ENCODE measurements at regions of chr14 and their contacts with region 1.

Region 1: DNA sequence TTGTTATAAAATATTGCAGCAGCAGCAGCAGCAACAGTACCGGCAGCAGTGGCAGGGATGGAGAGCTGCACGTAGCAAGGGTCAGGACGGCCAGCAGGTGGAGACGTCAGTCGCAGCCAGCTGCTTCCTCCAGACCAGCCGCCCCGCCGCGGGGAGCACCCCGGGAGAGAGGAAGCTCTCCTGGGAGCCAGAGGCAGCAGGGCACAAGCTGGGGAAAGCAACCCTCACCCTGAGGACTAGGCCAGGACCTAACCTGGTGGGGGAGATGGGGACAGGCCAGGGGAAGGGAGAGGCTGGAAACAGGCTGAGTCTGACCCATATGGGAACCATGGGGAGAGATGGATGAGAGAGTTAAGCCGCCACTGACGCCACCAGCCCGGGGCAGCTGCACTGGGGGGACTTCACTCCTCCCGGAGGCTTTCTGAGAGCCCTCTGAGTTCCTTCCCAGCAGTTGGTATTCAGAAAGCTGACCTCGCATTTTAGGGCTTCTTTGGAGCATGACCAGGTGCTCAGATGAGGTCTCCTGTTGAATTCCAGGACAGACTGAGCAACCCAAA is 56.3 kb downstream of the SPTB start:
- DNase-seq: peak; percentile 79
- ATAC-seq: peak; percentile 96
- H3K4me3 Mint-ChIP-seq: no peak overlapping the region
- H3K27ac Mint-ChIP-seq: no peak overlapping the region
- H3K4me1 Mint-ChIP-seq: peaks cover 5% of the 10 kb centered on the region
- H3K27me3 Mint-ChIP-seq: peaks cover 12% of the 10 kb centered on the region
- CTCF ChIP-seq: peak; percentile 71

Region 2: DNA sequence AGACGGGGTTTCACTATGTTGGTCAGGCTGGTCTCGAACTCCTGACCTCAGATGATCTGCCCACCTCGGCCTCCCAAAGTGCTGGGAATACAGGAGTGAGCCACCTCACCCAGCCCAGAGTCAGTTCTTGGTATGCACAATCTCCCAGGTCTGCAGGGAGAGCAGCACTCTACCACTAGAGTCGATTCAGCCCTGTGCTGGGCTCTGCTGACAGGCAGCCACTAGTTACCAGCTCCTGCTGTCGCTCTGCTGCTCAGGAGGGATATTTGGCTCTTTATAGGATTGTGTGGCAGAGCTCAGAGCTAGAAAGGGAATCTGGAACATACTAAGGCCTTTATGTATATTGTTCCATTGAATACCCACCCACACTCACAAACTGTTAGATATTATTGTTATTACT is 12.0 kb after region 1 on chr14:
- CTCF ChIA-PET with region 1: interaction called, 20 read pairs
- POLR2A ChIA-PET with region 1: no interaction called
- intact Hi-C with region 1: no loop called
- DNase-seq: no peak
- ATAC-seq: no peak
- H3K4me3 Mint-ChIP-seq: no peak overlapping the region
- H3K27ac Mint-ChIP-seq: no peak overlapping the region
- H3K4me1 Mint-ChIP-seq: no peaks in the 10 kb centered on the region
- H3K27me3 Mint-ChIP-seq: peaks cover 6% of the 10 kb centered on the region
- CTCF ChIP-seq: no peak

Region 3: GRCh38 chr14:64848239-64848638 is 24.9 kb after region 1 on chr14:
- CTCF ChIA-PET with region 1: interaction called, 14 read pairs
- POLR2A ChIA-PET with region 1: no interaction called
- intact Hi-C with region 1: no loop called
- DNase-seq: no peak
- ATAC-seq: no peak
- H3K4me3 Mint-ChIP-seq: no peak overlapping the region
- H3K27ac Mint-ChIP-seq: no peak overlapping the region
- H3K4me1 Mint-ChIP-seq: peaks cover 8% of the 10 kb centered on the region
- H3K27me3 Mint-ChIP-seq: peaks cover 26% of the 10 kb centered on the region
- CTCF ChIP-seq: no peak

Region 4: DNA sequence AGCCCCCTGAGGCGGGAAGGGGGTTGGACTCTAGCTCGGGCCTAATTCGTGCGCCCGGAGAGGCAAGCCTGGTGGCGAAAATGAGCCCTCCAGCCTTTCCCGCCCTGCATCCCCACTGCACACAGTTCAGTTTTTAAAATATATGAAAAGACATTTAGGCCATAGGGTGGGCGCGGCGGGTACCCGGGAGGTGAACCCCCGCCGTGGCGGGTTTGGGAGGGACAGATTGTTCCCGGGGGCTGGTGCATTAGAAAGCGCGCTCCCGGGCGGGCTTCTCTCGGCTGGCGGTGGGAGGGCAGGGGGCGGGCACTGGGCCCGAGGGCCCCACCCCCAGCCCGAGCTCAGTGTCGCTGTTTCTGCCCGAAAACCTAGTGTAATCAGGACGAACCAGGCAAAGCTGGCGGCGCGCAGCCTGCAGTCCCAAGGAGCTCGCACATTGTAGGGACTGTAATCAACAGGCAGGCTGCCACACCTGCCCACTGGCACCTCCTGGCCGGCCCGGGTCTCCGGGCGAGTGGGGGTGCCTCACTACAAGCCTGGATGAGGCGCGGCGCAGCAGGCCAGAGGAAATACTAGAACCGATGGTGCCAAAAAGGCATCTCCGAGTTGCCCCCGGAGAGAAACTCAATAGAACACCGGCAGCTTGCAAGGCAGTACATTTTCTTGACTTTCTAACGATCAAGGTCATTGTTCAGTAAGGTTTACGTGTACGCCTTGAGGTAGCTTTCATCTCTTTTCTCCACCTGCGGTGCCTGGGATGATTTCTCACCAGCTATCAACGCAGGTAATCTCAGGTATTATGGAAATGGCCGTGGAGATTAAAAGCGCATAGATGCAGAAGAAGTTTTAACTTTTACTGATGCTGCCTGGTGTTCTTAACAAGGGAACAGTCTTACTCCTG is 57.1 kb after region 1 on chr14:
- CTCF ChIA-PET with region 1: interaction called, 16 read pairs
- POLR2A ChIA-PET with region 1: no interaction called
- intact Hi-C with region 1: no loop called
- DNase-seq: peak; percentile 73
- ATAC-seq: peak; percentile 88
- H3K4me3 Mint-ChIP-seq: peak overlapping the region; percentile 77
- H3K27ac Mint-ChIP-seq: no peak overlapping the region
- H3K4me1 Mint-ChIP-seq: peaks cover 2% of the 10 kb centered on the region
- H3K27me3 Mint-ChIP-seq: peaks cover 42% of the 10 kb centered on the region
- CTCF ChIP-seq: no peak

Region 5: GRCh38 chr14:64899958-64900357 is 76.6 kb after region 1 on chr14:
- CTCF ChIA-PET with region 1: interaction called, 21 read pairs
- POLR2A ChIA-PET with region 1: no interaction called
- intact Hi-C with region 1: no loop called
- DNase-seq: no peak
- ATAC-seq: no peak
- H3K4me3 Mint-ChIP-seq: no peak overlapping the region
- H3K27ac Mint-ChIP-seq: no peak overlapping the region
- H3K4me1 Mint-ChIP-seq: no peaks in the 10 kb centered on the region
- H3K27me3 Mint-ChIP-seq: peaks cover 3% of the 10 kb centered on the region
- CTCF ChIP-seq: no peak

Region 6: DNA sequence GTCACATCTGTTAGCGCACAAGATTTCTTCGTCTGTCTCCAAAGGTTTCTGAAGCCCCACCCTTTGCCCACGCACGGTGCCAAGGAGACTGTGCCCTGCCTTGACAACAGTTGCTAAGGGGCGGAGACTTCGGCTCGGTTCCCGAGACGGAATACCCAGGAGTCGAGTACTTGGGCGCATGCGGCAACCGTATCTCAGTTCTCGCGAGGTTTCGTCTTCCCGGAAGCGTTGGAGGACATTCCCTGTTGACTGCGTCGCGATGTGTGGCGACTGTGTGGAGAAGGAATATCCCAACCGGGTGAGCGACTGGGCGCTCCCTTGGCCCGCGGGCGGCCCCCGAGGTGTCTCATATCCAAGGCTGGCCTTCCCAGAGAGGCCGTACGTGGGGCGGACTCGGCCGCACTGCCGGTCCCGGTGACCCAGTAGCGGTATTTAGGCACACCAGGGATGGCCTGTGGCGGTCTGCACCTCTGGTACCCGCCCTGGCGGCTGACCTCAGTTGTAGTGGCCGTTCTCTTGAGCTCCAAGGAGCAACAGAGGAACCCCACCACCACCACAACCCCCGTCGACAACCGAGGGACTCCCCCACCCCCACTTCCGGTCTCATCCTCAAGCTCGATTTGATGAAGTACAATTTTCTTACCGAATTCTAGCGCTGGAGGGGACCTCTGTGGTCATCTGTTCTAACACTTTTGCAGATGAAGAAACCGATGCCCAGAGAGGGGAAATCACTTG is 91.0 kb after region 1 on chr14 and contains the start of gene CHURC1:
- CTCF ChIA-PET with region 1: interaction called, 12 read pairs
- POLR2A ChIA-PET with region 1: no interaction called
- intact Hi-C with region 1: no loop called
- DNase-seq: peak; percentile 98
- ATAC-seq: peak; percentile 95
- H3K4me3 Mint-ChIP-seq: peak within 1 kb of the TSS; percentile 79
- H3K27ac Mint-ChIP-seq: peak within 1 kb of the TSS; percentile 95
- H3K4me1 Mint-ChIP-seq: peaks cover 55% of the 10 kb centered on the region
- H3K27me3 Mint-ChIP-seq: no peaks in the 10 kb centered on the region
- CTCF ChIP-seq: no peak
- total RNA-seq, gene CHURC1: 47.0 to 57.4 TPM

Region 7: GRCh38 chr14:64942531-64943111 is 119.2 kb after region 1 on chr14 and contains the start of gene GPX2:
- CTCF ChIA-PET with region 1: no interaction called
- POLR2A ChIA-PET with region 1: no interaction called
- intact Hi-C with region 1: no loop called
- DNase-seq: no peak
- ATAC-seq: no peak
- H3K4me3 Mint-ChIP-seq: no peak within 1 kb of the TSS
- H3K27ac Mint-ChIP-seq: peak within 1 kb of the TSS; percentile 64
- H3K4me1 Mint-ChIP-seq: peaks cover 48% of the 10 kb centered on the region
- H3K27me3 Mint-ChIP-seq: no peaks in the 10 kb centered on the region
- CTCF ChIP-seq: no peak
- total RNA-seq, gene GPX2: not detected

Region 8: DNA sequence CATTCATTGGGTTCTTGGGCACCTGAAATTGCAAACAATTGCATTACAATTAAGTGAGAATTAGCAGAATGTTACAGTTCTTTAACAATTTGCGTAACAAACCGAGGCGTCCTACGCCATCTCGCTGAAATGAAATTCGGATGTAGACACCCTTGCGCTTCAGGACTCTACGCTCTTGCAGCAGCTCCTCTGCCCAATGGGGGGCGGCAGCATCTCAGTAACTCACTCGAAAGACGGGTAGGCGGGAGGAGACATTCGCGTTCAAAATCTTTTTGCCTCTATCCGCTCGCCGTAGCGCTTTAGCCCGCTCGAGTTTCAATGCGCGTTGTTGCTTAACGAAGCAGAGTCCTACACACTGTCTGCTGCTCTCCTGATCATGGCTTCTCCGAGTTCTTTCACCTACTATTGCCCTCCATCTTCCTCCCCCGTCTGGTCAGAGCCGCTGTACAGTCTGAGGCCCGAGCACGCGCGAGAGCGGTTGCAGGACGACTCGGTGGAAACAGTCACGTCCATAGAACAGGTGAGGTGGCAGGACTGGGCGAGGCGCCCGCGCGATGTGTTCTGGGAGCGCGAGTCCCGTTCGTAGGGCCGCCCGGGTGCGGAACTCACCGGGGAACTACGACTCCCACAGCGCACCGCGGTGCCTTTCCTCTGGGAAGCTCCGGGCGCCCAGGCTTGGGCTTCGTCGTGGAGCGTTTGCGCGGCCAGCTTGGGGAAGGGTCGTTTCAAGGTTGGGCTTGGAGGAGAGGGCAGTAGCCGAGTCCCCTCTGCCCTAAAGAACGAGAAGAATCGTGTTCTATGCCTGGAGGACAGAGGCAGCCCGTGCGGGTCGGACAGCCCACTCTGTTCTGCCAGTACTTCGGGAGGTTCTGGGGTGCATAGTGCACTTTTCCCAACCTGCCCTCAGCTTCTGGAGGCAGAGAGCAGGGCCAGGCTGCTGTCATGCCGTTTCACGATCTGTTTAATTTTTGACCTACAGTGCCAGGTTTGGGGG is 163.5 kb after region 1 on chr14 and contains the start of gene FNTB:
- CTCF ChIA-PET with region 1: interaction called, 18 read pairs
- POLR2A ChIA-PET with region 1: no interaction called
- intact Hi-C with region 1: loop called (anchors 10 kb)
- DNase-seq: peak; percentile 96
- ATAC-seq: peak; percentile 94
- H3K4me3 Mint-ChIP-seq: peak within 1 kb of the TSS; percentile 78
- H3K27ac Mint-ChIP-seq: peak within 1 kb of the TSS; percentile 94
- H3K4me1 Mint-ChIP-seq: peaks cover 43% of the 10 kb centered on the region
- H3K27me3 Mint-ChIP-seq: peaks cover 7% of the 10 kb centered on the region
- CTCF ChIP-seq: peak; percentile 75
- total RNA-seq, gene FNTB: 18.8 to 23.5 TPM

Region 9: GRCh38 chr14:65156568-65157366 is 333.4 kb after region 1 on chr14:
- CTCF ChIA-PET with region 1: no interaction called
- POLR2A ChIA-PET with region 1: no interaction called
- intact Hi-C with region 1: no loop called
- DNase-seq: no peak
- ATAC-seq: no peak
- H3K4me3 Mint-ChIP-seq: no peak overlapping the region
- H3K27ac Mint-ChIP-seq: no peak overlapping the region
- H3K4me1 Mint-ChIP-seq: peaks cover 18% of the 10 kb centered on the region
- H3K27me3 Mint-ChIP-seq: no peaks in the 10 kb centered on the region
- CTCF ChIP-seq: no peak

Measured in activated CD8-positive, alpha-beta T cell treated with anti-CD3 and anti-CD28 coated beads for 36 hours (primary cell).